Activated CD4-positive, alpha-beta T cell treated with anti-CD3 and anti-CD28 coated beads, Interleukin-2, amount 10 ng/mL, durations not matched to agents 24 days and 14 days (primary cell): ENCODE measurements at regions of chr13 and their contacts with region 1.

Region 1: GRCh38 chr13:74133657-74134201 is 475 bp downstream of the KLF12 start:
- DNase-seq: peak; percentile 95
- H3K4me3 Mint-ChIP-seq: peak overlapping the region; percentile 97
- H3K27ac Mint-ChIP-seq: peak overlapping the region; percentile 99
- H3K4me1 Mint-ChIP-seq: peaks cover 34% of the 10 kb centered on the region
- H3K27me3 Mint-ChIP-seq: peaks cover 7% of the 10 kb centered on the region

Region 2: DNA sequence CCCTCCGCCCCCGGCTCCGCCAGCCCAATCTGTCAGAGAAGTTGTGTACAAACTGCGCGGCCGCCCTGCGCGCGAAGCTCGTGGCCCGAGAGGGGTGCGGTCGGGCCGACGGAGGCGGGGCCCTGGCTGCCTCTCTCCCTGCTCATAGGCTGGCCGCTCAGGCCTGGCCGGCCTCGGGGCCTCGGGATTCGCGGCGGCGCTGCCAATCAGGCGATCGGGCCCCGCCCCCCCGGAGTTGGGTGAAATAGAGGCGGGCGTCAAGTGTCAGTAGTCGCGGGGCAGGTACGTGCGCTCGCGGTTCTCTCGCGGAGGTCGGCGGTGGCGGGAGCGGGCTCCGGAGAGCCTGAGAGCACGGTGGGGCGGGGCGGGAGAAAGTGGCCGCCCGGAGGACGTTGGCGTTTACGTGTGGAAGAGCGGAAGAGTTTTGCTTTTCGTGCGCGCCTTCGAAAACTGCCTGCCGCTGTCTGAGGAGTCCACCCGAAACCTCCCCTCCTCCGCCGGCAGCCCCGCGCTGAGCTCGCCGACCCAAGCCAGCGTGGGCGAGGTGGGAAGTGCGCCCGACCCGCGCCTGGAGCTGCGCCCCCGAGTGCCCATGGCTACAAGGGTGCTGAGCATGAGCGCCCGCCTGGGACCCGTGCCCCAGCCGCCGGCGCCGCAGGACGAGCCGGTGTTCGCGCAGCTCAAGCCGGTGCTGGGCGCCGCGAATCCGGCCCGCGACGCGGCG is 1074.8 kb before region 1 on chr13 and contains the start of gene KLF5:
- intact Hi-C with region 1: loop called (anchors 5 kb)
- DNase-seq: peak; percentile 99
- H3K4me3 Mint-ChIP-seq: peak within 1 kb of the TSS; percentile 86
- H3K27ac Mint-ChIP-seq: peak within 1 kb of the TSS; percentile 83
- H3K4me1 Mint-ChIP-seq: peaks cover 20% of the 10 kb centered on the region
- H3K27me3 Mint-ChIP-seq: peaks cover 49% of the 10 kb centered on the region
- total RNA-seq, gene KLF5: 2.0 and 2.8 TPM in 2 replicates

Region 3: GRCh38 chr13:73835138-73835721 is 298.5 kb before region 1 on chr13:
- intact Hi-C with region 1: loop called (anchors 1 kb)
- DNase-seq: no peak
- H3K4me3 Mint-ChIP-seq: no peak overlapping the region
- H3K27ac Mint-ChIP-seq: no peak overlapping the region
- H3K4me1 Mint-ChIP-seq: peaks cover 5% of the 10 kb centered on the region
- H3K27me3 Mint-ChIP-seq: no peaks in the 10 kb centered on the region

Region 4: GRCh38 chr13:73984949-73985691 is 148.6 kb before region 1 on chr13:
- intact Hi-C with region 1: loop called (anchors 1 kb)
- DNase-seq: peak; percentile 88
- H3K4me3 Mint-ChIP-seq: peak overlapping the region; percentile 75
- H3K27ac Mint-ChIP-seq: peak overlapping the region; percentile 87
- H3K4me1 Mint-ChIP-seq: peaks cover 34% of the 10 kb centered on the region
- H3K27me3 Mint-ChIP-seq: no peaks in the 10 kb centered on the region

Region 5: DNA sequence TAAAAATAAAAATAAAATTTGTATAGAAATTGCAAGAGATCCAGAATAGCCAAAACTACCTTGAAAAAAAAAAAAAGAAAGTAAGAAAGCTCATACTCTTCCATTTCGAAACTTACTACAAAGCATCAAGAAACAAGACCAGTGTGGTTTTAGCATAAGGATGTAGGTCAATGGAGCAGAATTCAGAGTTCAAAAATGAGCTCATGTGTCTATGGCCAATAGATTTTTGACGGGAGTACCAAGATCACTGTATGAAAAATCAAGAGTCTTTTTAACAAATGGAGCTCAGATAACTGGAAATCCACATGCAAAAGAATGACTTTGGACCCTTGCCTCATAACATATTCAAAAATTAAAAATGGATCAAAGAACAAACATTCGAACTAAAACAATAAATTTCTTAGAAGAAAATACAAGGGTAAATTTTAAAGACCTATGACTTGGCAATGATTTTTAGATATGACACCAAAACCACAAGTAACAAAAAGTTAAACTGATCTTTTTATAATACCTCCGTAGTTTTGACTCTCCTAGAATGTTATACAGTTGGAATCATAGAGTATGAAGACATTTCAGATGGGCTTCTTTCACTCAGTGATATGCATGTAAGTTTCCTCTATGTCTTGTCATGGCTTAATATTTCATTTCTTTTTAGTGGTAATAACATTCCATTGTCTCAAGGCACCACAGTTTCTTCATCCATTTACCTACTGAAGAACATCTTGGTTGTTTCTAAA is 42.7 kb before region 1 on chr13:
- intact Hi-C with region 1: loop called (anchors 5 kb)
- DNase-seq: no peak
- H3K4me3 Mint-ChIP-seq: peak overlapping the region; percentile 56
- H3K27ac Mint-ChIP-seq: peak overlapping the region; percentile 68
- H3K4me1 Mint-ChIP-seq: peaks cover 29% of the 10 kb centered on the region
- H3K27me3 Mint-ChIP-seq: no peaks in the 10 kb centered on the region

Region 6: DNA sequence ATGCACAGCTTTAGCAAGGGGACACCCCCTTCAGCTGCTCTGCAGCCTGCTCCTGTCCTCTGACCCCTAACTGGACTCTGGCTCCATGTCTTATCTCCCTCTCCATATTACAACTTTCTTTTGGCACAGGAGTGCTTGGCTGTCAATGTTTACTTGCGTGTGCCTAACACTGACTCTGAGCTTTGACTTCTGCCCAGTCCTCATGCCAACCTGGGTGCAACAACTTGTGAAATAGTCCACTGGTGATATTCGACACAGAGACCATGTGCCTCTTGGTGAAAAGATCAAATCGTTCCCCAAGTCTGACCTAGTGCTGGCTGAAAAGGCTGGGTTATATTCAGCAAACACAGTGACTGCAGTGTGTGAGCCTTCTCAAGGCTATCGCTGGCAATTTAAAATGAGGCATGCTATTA is 34.5 kb after region 1 on chr13:
- intact Hi-C with region 1: no loop called
- DNase-seq: no peak
- H3K4me3 Mint-ChIP-seq: no peak overlapping the region
- H3K27ac Mint-ChIP-seq: no peak overlapping the region
- H3K4me1 Mint-ChIP-seq: no peaks in the 10 kb centered on the region
- H3K27me3 Mint-ChIP-seq: peaks cover 8% of the 10 kb centered on the region

Region 7: DNA sequence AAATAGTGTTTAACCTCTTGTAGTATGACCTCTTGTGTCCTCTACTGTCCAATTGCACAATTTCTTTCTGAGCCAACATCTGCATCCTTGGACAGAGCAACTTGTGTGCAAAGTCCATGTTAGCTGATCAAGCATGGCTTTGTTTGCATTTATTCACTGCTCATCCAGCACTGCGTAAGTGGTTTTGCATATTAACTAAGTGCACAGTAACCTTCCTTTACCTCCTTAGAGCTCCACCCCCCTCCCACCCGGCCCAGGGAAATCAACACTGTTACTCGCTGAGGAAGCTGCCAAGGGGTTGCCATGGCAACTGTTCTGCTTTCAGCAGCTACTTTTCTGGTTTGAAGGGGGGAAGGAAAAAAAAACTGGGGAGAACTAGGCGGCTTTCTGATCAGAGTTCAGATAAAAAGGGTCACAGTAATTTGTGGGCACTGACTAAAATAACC is 154.0 kb after region 1 on chr13:
- intact Hi-C with region 1: loop called (anchors 1 kb)
- DNase-seq: peak; percentile 91
- H3K4me3 Mint-ChIP-seq: peak overlapping the region; percentile 71
- H3K27ac Mint-ChIP-seq: peak overlapping the region; percentile 82
- H3K4me1 Mint-ChIP-seq: peaks cover 41% of the 10 kb centered on the region
- H3K27me3 Mint-ChIP-seq: no peaks in the 10 kb centered on the region